ENCODE measurements at regions of chr1 and their contacts with region 1.

Region 1: DNA sequence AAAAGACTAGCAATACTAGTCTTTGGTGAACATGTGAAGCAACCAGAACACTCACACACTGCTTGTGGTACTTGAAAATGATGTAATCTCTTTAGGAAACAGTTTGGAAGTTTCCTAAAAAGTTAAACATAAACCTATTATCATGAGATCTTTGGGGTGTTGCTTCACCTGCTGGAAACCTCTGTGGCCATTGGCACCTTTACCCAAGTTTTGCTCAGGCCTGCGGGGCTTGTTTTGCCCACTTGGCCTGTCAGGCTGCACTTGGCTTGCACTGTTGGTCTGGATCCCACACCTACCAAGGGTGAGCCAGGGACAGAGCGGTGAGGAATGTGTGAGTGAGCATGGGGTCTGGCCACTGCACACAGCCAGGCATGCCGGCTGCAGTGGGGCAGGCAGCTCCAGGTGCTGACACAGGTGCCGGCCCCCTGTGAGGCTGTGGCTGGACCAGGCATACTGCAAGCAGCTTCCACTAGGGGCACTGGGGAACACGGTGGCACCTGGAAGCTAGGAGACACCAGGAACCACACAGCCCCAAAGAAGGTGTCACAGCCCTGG is 14.4 kb upstream of the FNBP1L start:
- DNase-seq: peak; percentile 56
- ATAC-seq: peak; percentile 90
- H3K4me3 Mint-ChIP-seq: no peak overlapping the region
- H3K27ac Mint-ChIP-seq: no peak overlapping the region
- H3K4me1 Mint-ChIP-seq: no peaks in the 10 kb centered on the region
- H3K27me3 Mint-ChIP-seq: no peaks in the 10 kb centered on the region
- CTCF ChIP-seq: no peak

Region 2: DNA sequence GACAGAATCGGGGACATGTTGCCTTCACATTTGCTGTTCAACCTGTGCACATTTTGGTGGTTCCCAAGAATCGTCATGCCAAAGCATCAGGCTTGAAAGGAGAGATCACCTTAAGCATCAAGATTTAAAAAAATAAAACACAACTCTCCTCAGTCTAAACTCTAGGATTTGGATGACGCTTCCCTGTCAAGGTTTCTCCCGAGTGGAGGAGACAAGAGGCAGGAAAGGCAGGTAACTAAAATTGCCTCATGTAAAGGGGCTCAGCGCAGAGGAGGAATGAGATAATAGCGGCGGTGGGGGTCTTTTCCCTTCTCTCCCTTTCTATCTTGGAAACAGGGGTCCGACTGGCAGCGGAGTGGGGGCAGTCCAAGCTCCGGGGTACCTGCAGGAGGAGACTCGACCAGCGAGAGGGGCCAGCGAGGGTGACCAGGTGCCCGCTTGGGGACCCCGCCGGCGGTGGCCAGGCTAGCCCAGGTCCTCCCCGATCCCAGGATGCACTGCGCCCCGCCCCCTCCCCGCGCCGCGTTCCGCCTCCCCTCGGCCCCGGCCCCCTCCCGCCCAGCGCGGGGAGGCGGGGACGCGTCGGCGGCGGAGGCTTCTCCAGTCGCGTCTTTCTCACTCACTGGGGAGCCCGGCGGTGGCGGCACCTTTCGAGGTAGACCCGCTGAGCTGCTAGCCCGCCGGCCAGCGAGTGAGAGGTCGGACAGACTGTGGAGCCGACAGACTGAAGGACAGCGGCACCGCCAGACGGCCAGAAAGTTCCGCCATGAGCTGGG is 14.2 kb after region 1 on chr1 and contains the start of gene FNBP1L:
- CTCF ChIA-PET with region 1: interaction called, 10 read pairs
- POLR2A ChIA-PET with region 1: interaction called, 5 read pairs
- DNase-seq: peak; percentile 83
- ATAC-seq: peak; percentile 80
- H3K4me3 Mint-ChIP-seq: peak within 1 kb of the TSS; percentile 98
- H3K27ac Mint-ChIP-seq: peak within 1 kb of the TSS; percentile 98
- H3K4me1 Mint-ChIP-seq: peaks cover 34% of the 10 kb centered on the region
- H3K27me3 Mint-ChIP-seq: no peaks in the 10 kb centered on the region
- CTCF ChIP-seq: no peak
- total RNA-seq, gene FNBP1L: 79.1 to 81.8 TPM (median 79.6 TPM) in 3 replicates

Measured in WTC11 (cell line).